ENCODE measurements at regions of chr5 and their contacts with region 1.

Region 1: GRCh38 chr5:78964887-78965286 is 20.2 kb downstream of the ARSB start:
- DNase-seq: no peak
- H3K4me3 Mint-ChIP-seq: no peak overlapping the region
- H3K27ac Mint-ChIP-seq: no peak overlapping the region
- H3K4me1 Mint-ChIP-seq: no peaks in the 10 kb centered on the region
- H3K27me3 Mint-ChIP-seq: no peaks in the 10 kb centered on the region

Region 2: DNA sequence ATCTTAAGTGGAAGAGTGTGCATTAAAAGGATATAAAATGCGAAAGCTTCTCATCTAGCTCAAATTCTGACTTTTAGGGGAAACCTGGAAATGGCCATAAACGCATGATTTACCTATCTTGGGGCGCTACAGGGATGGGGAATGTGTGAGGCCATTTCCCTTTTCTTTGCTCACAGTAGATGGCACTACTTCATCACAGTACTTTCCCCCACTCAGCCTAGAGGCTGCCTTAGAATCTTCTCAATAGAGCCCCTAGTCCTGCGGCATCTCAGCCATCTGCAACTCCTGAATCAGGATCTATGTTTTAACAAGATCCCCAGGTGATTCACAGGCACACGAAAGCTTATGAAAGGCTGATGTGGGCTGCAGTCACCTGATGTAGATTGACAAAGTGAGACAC is 427.1 kb before region 1 on chr5:
- CTCF ChIA-PET with region 1: no interaction called
- intact Hi-C with region 1: loop called (anchors 5 kb)
- DNase-seq: no peak
- H3K4me3 Mint-ChIP-seq: no peak overlapping the region
- H3K27ac Mint-ChIP-seq: no peak overlapping the region
- H3K4me1 Mint-ChIP-seq: no peaks in the 10 kb centered on the region
- H3K27me3 Mint-ChIP-seq: no peaks in the 10 kb centered on the region

Region 3: DNA sequence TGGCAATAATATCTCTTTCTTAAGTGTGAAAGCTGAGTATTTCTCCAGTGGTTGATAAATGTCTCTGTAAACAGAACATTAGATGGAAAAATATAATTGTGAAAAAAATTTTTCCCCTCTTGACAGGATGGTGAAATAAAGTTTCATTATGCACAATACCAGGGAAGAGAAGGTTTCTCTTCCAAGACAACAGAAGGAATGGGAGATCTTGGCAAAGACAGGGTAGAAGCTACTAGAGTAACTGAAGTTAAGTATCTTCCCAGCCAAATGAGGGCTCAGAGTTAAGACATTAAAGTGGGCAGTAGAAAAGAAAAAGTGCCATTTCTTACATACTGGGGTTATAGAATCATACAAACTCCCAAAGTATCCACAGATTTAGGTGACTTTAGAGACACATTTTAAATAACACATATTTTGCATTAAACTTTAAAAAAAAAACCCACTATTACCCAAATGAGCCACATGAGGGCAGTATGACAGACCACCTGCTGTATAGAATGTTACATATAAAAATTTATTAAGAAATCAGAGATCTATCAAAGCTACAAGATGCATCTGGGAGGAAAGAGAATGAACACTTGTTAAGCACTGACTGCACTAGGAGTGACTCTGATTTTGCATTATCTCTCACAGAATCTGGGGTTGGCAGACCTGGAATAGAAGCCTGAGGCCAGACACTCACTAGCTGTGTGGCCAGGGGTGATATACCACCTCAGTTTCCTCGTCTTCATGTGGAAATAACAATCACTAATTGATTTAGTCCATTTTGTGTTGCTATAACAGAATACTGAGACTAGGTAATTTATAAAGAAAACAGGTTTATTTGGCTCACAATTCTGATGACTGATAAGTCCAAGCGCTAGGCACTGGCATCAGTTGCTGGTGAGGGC is 78.3 kb before region 1 on chr5:
- CTCF ChIA-PET with region 1: no interaction called
- intact Hi-C with region 1: loop called (anchors 5 kb)
- DNase-seq: no peak
- H3K4me3 Mint-ChIP-seq: no peak overlapping the region
- H3K27ac Mint-ChIP-seq: no peak overlapping the region
- H3K4me1 Mint-ChIP-seq: peaks cover 13% of the 10 kb centered on the region
- H3K27me3 Mint-ChIP-seq: no peaks in the 10 kb centered on the region

Measured in activated naive CD4-positive, alpha-beta T cell treated with anti-CD3 and anti-CD28 coated beads for 36 hours (primary cell).